CD14-positive monocyte (primary cell): ENCODE measurements at regions of chr1 and their contacts with region 1.

Region 1: GRCh38 chr1:112625696-112626095 is 6.1 kb downstream of the CAPZA1 start:
- DNase-seq: peak in 1 of 3 donors; percentile 44
- H3K4me3 ChIP-seq: no peak overlapping the region
- H3K4me3 Mint-ChIP-seq: no peak overlapping the region
- H3K27ac ChIP-seq: peak overlapping the region in 1 of 2 donors; percentile 65
- H3K27ac Mint-ChIP-seq: peak overlapping the region; percentile 47 to 86 (median 70)
- H3K4me1 ChIP-seq: peaks cover 41 to 87% of the 10 kb centered on the region in 2 donors
- H3K4me1 Mint-ChIP-seq: peaks cover 72% of the 10 kb centered on the region
- H3K27me3 ChIP-seq: no peaks in the 10 kb centered on the region
- H3K27me3 Mint-ChIP-seq: no peaks in the 10 kb centered on the region
- CTCF ChIP-seq: no peak

Region 2: DNA sequence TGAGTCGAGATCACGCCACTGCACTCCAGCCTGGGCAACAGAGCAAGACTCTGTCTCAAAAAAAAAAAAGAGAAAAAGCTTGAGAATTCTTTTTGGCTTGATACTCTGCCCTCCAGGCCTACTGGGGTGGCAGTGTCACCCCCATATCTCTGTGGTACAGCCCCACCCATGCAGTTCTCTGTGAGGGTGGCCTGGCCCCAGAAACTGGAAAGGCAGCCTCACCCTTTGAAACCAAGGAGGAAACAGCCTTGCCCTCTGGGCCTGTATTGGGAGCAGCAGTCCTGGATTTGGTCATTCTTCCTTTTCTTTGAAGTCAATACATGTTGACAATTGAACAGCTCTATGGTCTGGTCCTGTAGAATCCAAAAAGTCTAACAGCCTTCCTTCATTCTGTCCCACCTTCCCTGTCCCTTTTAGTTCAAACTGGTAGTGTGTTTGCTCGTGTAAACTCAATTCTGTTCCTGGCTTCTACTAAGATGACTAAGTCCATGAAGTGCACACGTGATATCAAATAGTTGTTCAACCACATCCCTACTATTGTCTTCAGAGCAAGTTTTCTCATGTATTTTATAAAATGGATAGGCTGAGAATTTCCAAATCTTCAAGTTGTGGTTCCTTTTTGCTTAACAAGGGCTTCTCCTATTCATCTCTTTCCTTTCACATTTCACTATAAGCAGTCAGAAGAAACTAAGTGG is 19.9 kb before region 1 on chr1:
- intact Hi-C with region 1: no loop called
- DNase-seq: no peak
- H3K4me3 ChIP-seq: no peak overlapping the region
- H3K4me3 Mint-ChIP-seq: no peak overlapping the region
- H3K27ac ChIP-seq: no peak overlapping the region
- H3K27ac Mint-ChIP-seq: peak overlapping the region in 1 of 7 donors; percentile 2
- H3K4me1 ChIP-seq: peaks cover 3% of the 10 kb centered on the region in 2 donors
- H3K4me1 Mint-ChIP-seq: peaks cover 7% of the 10 kb centered on the region
- H3K27me3 ChIP-seq: no peaks in the 10 kb centered on the region
- H3K27me3 Mint-ChIP-seq: peaks cover 0 to 2% (median 0%) of the 10 kb centered on the region in 3 donors
- CTCF ChIP-seq: no peak

Region 3: DNA sequence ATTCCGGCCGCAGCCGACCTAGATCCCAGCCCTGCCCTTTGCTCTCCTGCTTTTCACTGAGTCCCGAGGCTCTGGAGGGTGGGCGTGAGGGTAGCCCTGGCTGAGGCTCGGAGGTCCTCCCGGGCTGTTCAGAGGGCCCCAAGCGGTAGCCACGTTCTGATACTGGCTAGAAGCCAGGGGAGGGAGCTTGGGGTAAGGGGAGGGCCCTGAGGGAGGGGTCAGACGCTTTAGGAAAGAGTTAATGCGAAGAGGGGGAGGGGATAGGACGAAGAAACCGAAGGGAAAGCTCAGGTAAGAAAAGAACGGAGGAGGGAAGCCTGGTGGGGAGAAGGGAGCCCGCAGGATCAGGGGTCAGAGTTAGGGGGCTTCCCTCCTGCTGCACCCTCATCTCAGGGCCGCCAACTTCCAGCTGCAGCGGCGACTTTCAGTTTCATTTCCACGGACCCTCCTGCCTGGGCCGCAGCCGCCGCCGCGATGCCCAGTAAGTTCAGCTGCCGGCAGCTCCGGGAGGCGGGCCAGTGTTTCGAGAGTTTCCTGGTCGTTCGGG is 48.8 kb after region 1 on chr1 and contains the start of gene MOV10:
- intact Hi-C with region 1: loop called in 1 of 2 experiments (anchors 5 kb)
- DNase-seq: peak; percentile 51 to 67 (median 53)
- H3K4me3 ChIP-seq: peak within 1 kb of the TSS; percentile 84 to 98 (median 95)
- H3K4me3 Mint-ChIP-seq: peak within 1 kb of the TSS; percentile 98 to 99
- H3K27ac ChIP-seq: peak within 1 kb of the TSS; percentile 58 to 84
- H3K27ac Mint-ChIP-seq: peak within 1 kb of the TSS; percentile 78 to 94 (median 92)
- H3K4me1 ChIP-seq: peaks cover 20 to 23% of the 10 kb centered on the region in 2 donors
- H3K4me1 Mint-ChIP-seq: peaks cover 26% of the 10 kb centered on the region
- H3K27me3 ChIP-seq: no peaks in the 10 kb centered on the region
- H3K27me3 Mint-ChIP-seq: peaks cover 0 to 10% (median 7%) of the 10 kb centered on the region in 3 donors
- CTCF ChIP-seq: no peak
- polyA plus RNA-seq, gene MOV10: 12.0 to 61.2 (median 13.6) TPM